Activated B cell treated with CpG ODN at 0.5 μM for 24 hours (primary cell): ENCODE measurements at regions of chr3 and their contacts with region 1.

Region 1: GRCh38 chr3:108315767-108316301 is 19.5 kb downstream of the HHLA2 start:
- DNase-seq: no peak
- ATAC-seq: no peak
- H3K4me3 Mint-ChIP-seq: no peak overlapping the region
- H3K27ac Mint-ChIP-seq: no peak overlapping the region
- H3K4me1 Mint-ChIP-seq: peaks cover 8% of the 10 kb centered on the region
- H3K27me3 Mint-ChIP-seq: no peaks in the 10 kb centered on the region
- CTCF ChIP-seq: no peak

Region 2: DNA sequence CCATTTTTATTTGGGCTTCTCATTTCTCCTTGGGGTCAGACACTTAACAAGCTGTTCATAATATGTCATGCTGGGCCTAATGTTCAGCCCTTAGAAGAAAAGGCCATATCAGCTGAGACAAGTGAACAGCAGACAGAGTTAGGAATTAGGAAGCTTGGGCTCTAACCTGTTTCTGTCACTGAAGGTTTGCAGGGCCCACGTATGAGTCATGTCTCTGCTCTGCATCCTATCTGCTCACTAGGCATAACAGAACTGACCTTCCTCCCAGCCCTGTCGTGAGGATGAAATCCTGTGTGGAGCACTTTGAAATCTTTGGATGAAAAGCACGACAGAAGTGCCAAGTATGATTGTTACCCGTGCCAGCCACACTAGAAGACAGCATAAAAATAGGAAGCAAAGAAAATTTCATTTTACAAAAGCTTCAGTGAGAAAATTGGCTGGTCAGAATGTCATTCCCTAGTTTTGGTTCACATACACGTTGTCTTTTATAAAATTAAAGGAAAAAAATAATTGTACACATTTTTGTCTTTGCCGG is 198.5 kb before region 1 on chr3:
- CTCF ChIA-PET with region 1: no interaction called
- POLR2A ChIA-PET with region 1: no interaction called
- intact Hi-C with region 1: no loop called
- DNase-seq: no peak
- ATAC-seq: peak; percentile 65
- H3K4me3 Mint-ChIP-seq: no peak overlapping the region
- H3K27ac Mint-ChIP-seq: no peak overlapping the region
- H3K4me1 Mint-ChIP-seq: peaks cover 48% of the 10 kb centered on the region
- H3K27me3 Mint-ChIP-seq: no peaks in the 10 kb centered on the region
- CTCF ChIP-seq: no peak

Region 3: DNA sequence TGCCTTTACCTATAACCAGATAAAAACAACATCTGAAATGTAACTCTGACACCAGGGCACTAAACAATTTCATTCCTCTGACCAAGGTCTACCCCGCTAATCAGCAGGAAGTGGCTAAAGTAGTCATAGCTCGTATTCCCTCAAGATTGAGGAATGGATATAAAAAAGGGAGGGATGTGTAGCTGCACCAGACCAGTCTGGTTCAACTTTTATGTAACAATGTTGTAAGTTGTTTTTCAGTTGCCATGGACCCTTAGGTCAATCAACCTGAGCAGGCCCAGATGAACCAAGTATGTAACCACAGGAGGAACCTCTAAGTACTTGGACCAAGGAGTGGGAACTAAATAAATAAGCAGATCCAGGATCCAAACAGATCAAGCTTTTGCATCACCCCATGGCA is 65.2 kb before region 1 on chr3:
- CTCF ChIA-PET with region 1: no interaction called
- POLR2A ChIA-PET with region 1: no interaction called
- intact Hi-C with region 1: loop called (anchors 2 kb)
- DNase-seq: no peak
- ATAC-seq: no peak
- H3K4me3 Mint-ChIP-seq: no peak overlapping the region
- H3K27ac Mint-ChIP-seq: no peak overlapping the region
- H3K4me1 Mint-ChIP-seq: peaks cover 3% of the 10 kb centered on the region
- H3K27me3 Mint-ChIP-seq: no peaks in the 10 kb centered on the region
- CTCF ChIP-seq: no peak

Region 4: DNA sequence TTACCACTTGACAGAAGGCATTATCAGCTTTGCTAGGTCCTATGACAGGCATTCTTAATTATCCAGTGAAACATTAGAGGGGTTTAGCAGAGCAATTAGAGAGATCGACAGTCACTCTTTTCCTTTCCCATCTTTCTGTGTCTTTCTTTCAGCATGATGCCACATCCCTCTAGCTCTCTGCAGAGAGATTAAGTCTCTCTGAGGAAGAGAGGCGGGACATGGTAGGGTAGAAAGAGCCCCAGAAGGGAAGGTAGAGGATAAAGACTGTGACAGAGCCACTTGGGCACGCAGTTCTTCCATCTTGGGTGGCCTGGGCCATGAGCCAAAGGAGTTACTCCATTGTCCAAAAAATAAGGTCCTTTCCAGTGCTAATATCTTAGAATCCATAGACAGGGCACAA is 36.3 kb after region 1 on chr3:
- CTCF ChIA-PET with region 1: no interaction called
- POLR2A ChIA-PET with region 1: no interaction called
- intact Hi-C with region 1: no loop called
- DNase-seq: no peak
- ATAC-seq: no peak
- H3K4me3 Mint-ChIP-seq: no peak overlapping the region
- H3K27ac Mint-ChIP-seq: no peak overlapping the region
- H3K4me1 Mint-ChIP-seq: peaks cover 2% of the 10 kb centered on the region
- H3K27me3 Mint-ChIP-seq: no peaks in the 10 kb centered on the region
- CTCF ChIP-seq: no peak